T-cell (primary cell): ENCODE measurements at regions of chr6 and their contacts with region 1.

Region 1: DNA sequence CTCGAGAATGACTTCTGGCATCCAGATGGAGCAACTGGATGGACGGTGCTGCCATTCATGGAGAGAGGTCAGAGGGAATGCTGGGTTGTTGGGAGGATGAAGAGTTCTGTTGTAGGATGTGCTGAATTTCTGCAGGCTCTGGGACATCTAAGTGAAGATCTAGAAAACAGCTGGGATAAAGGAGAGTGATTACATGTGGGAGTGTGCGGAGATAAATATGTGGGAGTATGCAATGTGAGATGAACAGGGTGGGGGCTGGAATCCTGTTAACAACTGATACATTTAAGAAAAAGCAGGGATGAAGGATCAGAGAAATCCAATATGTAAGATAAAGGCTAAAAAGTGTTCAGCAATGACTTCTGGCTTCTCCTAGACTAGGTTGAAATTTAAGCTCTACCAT is 43.1 kb downstream of the FAXC start:
- DNase-seq: no peak
- ATAC-seq: no peak
- H3K4me3 ChIP-seq: no peak overlapping the region
- H3K4me3 Mint-ChIP-seq: no peak overlapping the region
- H3K27ac ChIP-seq: no peak overlapping the region
- H3K27ac Mint-ChIP-seq: no peak overlapping the region
- H3K4me1 ChIP-seq: no peaks in the 10 kb centered on the region
- H3K4me1 Mint-ChIP-seq: no peaks in the 10 kb centered on the region
- H3K27me3 ChIP-seq: peaks cover 2 to 6% of the 10 kb centered on the region in 2 experiments
- H3K27me3 Mint-ChIP-seq: peaks cover 7 to 19% of the 10 kb centered on the region in 2 donors

Region 2: DNA sequence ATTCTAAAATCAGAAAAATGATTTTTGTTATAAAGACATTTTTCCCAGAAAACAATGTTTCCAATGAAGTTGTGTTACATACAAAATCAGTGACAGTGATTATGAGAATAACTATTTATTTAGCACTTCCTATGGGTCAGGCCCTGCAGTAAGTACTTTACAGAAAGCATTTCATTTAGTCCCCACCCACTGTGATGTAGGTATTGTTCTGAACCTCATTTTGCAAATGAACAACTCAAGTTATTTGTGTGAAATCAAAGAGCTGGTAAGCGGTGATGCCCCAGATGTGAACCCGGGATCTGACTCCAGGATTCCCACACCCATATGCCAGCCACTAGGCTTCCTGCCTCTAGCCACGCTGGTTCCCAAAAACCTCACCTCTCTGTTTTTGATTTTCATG is 12.2 kb after region 1 on chr6:
- CTCF ChIA-PET with region 1: no interaction called
- POLR2A ChIA-PET with region 1: interaction called in 1 of 2 experiments, 12 read pairs
- DNase-seq: no peak
- ATAC-seq: no peak
- H3K4me3 ChIP-seq: no peak overlapping the region
- H3K4me3 Mint-ChIP-seq: no peak overlapping the region
- H3K27ac ChIP-seq: no peak overlapping the region
- H3K27ac Mint-ChIP-seq: no peak overlapping the region
- H3K4me1 ChIP-seq: no peaks in the 10 kb centered on the region
- H3K4me1 Mint-ChIP-seq: no peaks in the 10 kb centered on the region
- H3K27me3 ChIP-seq: peaks cover 0 to 7% of the 10 kb centered on the region in 2 experiments
- H3K27me3 Mint-ChIP-seq: peaks cover 26 to 27% of the 10 kb centered on the region in 2 donors